Mammary epithelial cell (primary cell): ENCODE measurements at regions of chr10 and their contacts with region 1.

Region 1: GRCh38 chr10:76036111-76036940 is 604.9 kb downstream of the LRMDA start:
- DNase-seq: peak; percentile 45
- H3K4me3 ChIP-seq: no peak overlapping the region
- H3K27ac ChIP-seq: no peak overlapping the region
- H3K4me1 ChIP-seq: peaks cover 4% of the 10 kb centered on the region
- H3K27me3 ChIP-seq: no peaks in the 10 kb centered on the region
- CTCF ChIP-seq: peak; percentile 86 to 91

Region 2: GRCh38 chr10:76086761-76087639 is 50.7 kb after region 1 on chr10:
- CTCF ChIA-PET with region 1: no interaction called
- dilution Hi-C with region 1: no loop called
- in situ Hi-C with region 1: no loop called
- intact Hi-C with region 1: loop called (anchors 1 kb)
- DNase-seq: peak; percentile 56
- H3K4me3 ChIP-seq: no peak overlapping the region
- H3K27ac ChIP-seq: no peak overlapping the region
- H3K4me1 ChIP-seq: peaks cover 12% of the 10 kb centered on the region
- H3K27me3 ChIP-seq: no peaks in the 10 kb centered on the region
- CTCF ChIP-seq: peak; percentile 77 to 84

Region 3: GRCh38 chr10:76509446-76509845 is 473.1 kb after region 1 on chr10:
- CTCF ChIA-PET with region 1: no interaction called
- dilution Hi-C with region 1: no loop called
- in situ Hi-C with region 1: no loop called
- intact Hi-C with region 1: no loop called
- DNase-seq: peak; percentile 55
- H3K4me3 ChIP-seq: no peak overlapping the region
- H3K27ac ChIP-seq: no peak overlapping the region
- H3K4me1 ChIP-seq: no peaks in the 10 kb centered on the region
- H3K27me3 ChIP-seq: no peaks in the 10 kb centered on the region
- CTCF ChIP-seq: no peak